ENCODE measurements at regions of chr17 and their contacts with region 1.

Region 1: GRCh38 chr17:28951991-28952975 is 965 bp upstream of the PHF12 start:
- DNase-seq: peak; percentile 99
- ATAC-seq: peak; percentile 86
- H3K4me3 ChIP-seq: peak overlapping the region; percentile 70 to 88 (median 71)
- H3K27ac ChIP-seq: peak overlapping the region; percentile 99
- H3K4me1 ChIP-seq: peaks cover 23% of the 10 kb centered on the region
- H3K27me3 ChIP-seq: no peaks in the 10 kb centered on the region; a peak in 1 of 5 replicates
- CTCF ChIP-seq: no peak
- EP300 ChIP-seq: peak in 1 of 2 experiments; percentile 33; a peak in 1 of 4 replicates
- POLR2A ChIP-seq: peak in 1 of 2 experiments; percentile 81; a peak in 3 of 4 replicates
- RAD21 ChIP-seq: peak; percentile 44; the same call in 1 of the 2 replicates

Region 2: GRCh38 chr17:28717578-28718333 is 234.5 kb before region 1 on chr17 and contains the start of gene RAB34:
- CTCF ChIA-PET with region 1: no interaction called
- POLR2A ChIA-PET with region 1: interaction called, 26 read pairs
- in situ Hi-C with region 1: no loop called
- intact Hi-C with region 1: no loop called
- DNase-seq: no peak
- ATAC-seq: no peak
- H3K4me3 ChIP-seq: no peak within 1 kb of the TSS
- H3K27ac ChIP-seq: no peak within 1 kb of the TSS
- H3K4me1 ChIP-seq: peaks cover 44% of the 10 kb centered on the region
- H3K27me3 ChIP-seq: peaks cover 2 to 3% of the 10 kb centered on the region in 2 experiments; a peak in 3 of 5 replicates
- CTCF ChIP-seq: no peak
- EP300 ChIP-seq: no peak
- POLR2A ChIP-seq: no peak
- RAD21 ChIP-seq: no peak
- total RNA-seq, gene RAB34: 0.49 TPM in 1 of 2 replicates, not detected in the other

Region 3: DNA sequence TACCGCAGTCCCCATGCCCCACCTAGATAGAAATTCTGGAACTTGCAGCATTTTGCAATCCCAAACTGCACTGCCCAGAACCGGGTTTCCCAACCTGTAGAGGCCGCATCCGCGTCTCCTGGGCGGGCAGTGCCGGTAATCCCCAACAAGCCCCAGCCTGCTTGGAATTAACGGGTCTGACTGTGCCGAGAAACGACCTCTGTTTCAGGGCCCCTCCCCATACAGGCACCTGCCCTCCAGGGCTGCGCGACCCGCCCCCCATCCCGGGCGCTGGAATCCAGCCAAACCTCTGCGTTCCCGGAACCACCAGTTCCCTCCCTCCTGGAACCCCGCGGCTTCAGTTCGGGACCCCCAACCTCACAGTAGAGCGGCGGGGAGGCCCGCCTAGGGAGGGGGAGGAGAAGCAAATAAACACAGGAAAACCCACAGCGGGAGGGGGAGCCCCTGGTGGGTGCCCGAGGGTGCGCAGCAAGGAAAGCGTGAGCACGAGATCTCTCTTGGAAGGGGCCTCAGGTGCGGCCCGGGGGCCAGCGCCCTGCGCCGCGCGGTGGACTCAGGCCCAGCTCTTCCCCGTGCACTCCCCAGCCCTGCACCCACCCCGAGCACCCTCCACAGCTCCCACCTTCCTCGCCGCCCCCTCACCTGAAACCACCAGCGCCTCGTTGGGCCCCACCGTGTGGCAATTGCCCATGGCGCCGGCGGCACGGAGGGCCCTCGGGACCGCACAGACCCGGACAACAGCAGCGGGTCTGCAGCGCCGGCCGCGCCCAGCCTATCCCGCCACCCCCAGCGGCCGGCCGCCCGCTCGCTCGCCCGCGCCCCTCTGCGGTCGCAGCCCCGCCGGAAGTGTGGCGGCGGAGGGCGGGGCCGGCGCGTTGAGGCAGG is 55.2 kb before region 1 on chr17 and contains the start of gene FLOT2:
- CTCF ChIA-PET with region 1: no interaction called
- POLR2A ChIA-PET with region 1: interaction called, 14 read pairs
- in situ Hi-C with region 1: no loop called
- intact Hi-C with region 1: no loop called
- DNase-seq: peak; percentile 54
- ATAC-seq: peak; percentile 86
- H3K4me3 ChIP-seq: peak within 1 kb of the TSS; percentile 76 to 93 (median 89)
- H3K27ac ChIP-seq: peak within 1 kb of the TSS; percentile 84
- H3K4me1 ChIP-seq: peaks cover 53% of the 10 kb centered on the region
- H3K27me3 ChIP-seq: no peaks in the 10 kb centered on the region; a peak in 1 of 5 replicates
- CTCF ChIP-seq: peak; percentile 50
- EP300 ChIP-seq: 0 out of 4 replicates have a peak, but pooled peaks of 1 of the 2 experiments have one; percentile 11
- POLR2A ChIP-seq: peak; percentile 40 to 83
- RAD21 ChIP-seq: peak; percentile 49; the same call in 1 of the 2 replicates
- total RNA-seq, gene FLOT2: 54.3 and 60.7 TPM in 2 replicates

Region 4: DNA sequence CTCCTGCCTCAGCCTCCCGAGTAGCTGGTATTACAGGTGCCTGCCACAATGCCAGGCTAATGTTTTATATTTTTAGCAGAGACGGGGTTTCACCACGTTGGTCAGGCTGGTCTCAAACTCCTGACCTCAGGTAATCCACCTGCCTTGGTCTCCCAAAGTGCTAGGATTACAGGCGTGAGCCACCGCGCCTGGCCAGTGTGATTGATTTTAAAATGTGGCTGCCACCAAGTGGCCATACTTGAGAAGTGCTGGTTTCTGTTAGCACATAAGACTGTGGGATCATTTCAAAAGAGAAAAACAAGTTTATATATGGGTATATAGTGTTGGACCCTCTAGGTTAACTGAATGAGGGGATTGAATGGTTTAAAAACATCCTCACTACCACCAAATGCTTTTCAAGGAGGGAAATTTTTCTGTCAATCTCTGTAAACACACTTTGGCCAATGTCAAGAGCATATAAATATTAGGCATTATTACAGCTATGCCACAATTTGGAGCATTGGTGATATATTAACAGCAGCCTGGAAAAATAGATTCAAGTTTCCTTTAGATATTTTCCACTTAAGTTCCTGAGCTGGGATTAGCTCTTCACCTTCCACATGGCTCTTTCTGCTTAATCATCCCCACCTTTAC is 35.9 kb before region 1 on chr17:
- CTCF ChIA-PET with region 1: no interaction called
- POLR2A ChIA-PET with region 1: no interaction called
- in situ Hi-C with region 1: loop called (anchors 5 kb)
- intact Hi-C with region 1: no loop called
- DNase-seq: peak; percentile 38
- ATAC-seq: peak; percentile 78
- H3K4me3 ChIP-seq: no peak overlapping the region
- H3K27ac ChIP-seq: no peak overlapping the region
- H3K4me1 ChIP-seq: peaks cover 19% of the 10 kb centered on the region
- H3K27me3 ChIP-seq: no peaks in the 10 kb centered on the region
- CTCF ChIP-seq: peak; percentile 79
- EP300 ChIP-seq: no peak
- POLR2A ChIP-seq: no peak
- RAD21 ChIP-seq: no peak

Region 5: GRCh38 chr17:28967221-28968140 is 15.2 kb after region 1 on chr17:
- CTCF ChIA-PET with region 1: no interaction called
- POLR2A ChIA-PET with region 1: interaction called, 25 read pairs
- in situ Hi-C with region 1: no loop called
- intact Hi-C with region 1: no loop called
- DNase-seq: no peak
- ATAC-seq: no peak
- H3K4me3 ChIP-seq: no peak overlapping the region
- H3K27ac ChIP-seq: no peak overlapping the region
- H3K4me1 ChIP-seq: peaks cover 58% of the 10 kb centered on the region
- H3K27me3 ChIP-seq: peaks cover 2 to 61% of the 10 kb centered on the region in 2 experiments; a peak in 4 of 5 replicates
- CTCF ChIP-seq: no peak
- EP300 ChIP-seq: no peak
- POLR2A ChIP-seq: no peak
- RAD21 ChIP-seq: no peak

Region 6: GRCh38 chr17:29180034-29180787 is 227.9 kb after region 1 on chr17 and contains the start of gene MYO18A:
- CTCF ChIA-PET with region 1: no interaction called
- POLR2A ChIA-PET with region 1: interaction called, 22 read pairs
- in situ Hi-C with region 1: no loop called
- intact Hi-C with region 1: no loop called
- DNase-seq: peak; percentile 45
- ATAC-seq: peak; percentile 64
- H3K4me3 ChIP-seq: peak within 1 kb of the TSS; percentile 68 to 88 (median 86)
- H3K27ac ChIP-seq: peak within 1 kb of the TSS; percentile 98
- H3K4me1 ChIP-seq: peaks cover 37% of the 10 kb centered on the region
- H3K27me3 ChIP-seq: no peaks in the 10 kb centered on the region; a peak in 1 of 5 replicates
- CTCF ChIP-seq: peak; percentile 88
- EP300 ChIP-seq: no peak
- POLR2A ChIP-seq: no peak
- RAD21 ChIP-seq: peak; percentile 96
- total RNA-seq, gene MYO18A: 21.2 and 24.8 TPM in 2 replicates

Measured in HepG2 (cell line).